Activated T-helper 1 cell treated with anti-CD3 and anti-CD28 coated beads, Interleukin-12 subunit alpha, Interleukin-12 subunit beta, Interleukin-2, Interleukin-4 antibody, amounts not matched to agents 30 ng/mL and 10 ng/mL and 1 ng/mL, durations not matched to agents 14 hours and 24 hours and 36 hours (primary cell): ENCODE measurements at regions of chr18 and their contacts with region 1.

Region 1: DNA sequence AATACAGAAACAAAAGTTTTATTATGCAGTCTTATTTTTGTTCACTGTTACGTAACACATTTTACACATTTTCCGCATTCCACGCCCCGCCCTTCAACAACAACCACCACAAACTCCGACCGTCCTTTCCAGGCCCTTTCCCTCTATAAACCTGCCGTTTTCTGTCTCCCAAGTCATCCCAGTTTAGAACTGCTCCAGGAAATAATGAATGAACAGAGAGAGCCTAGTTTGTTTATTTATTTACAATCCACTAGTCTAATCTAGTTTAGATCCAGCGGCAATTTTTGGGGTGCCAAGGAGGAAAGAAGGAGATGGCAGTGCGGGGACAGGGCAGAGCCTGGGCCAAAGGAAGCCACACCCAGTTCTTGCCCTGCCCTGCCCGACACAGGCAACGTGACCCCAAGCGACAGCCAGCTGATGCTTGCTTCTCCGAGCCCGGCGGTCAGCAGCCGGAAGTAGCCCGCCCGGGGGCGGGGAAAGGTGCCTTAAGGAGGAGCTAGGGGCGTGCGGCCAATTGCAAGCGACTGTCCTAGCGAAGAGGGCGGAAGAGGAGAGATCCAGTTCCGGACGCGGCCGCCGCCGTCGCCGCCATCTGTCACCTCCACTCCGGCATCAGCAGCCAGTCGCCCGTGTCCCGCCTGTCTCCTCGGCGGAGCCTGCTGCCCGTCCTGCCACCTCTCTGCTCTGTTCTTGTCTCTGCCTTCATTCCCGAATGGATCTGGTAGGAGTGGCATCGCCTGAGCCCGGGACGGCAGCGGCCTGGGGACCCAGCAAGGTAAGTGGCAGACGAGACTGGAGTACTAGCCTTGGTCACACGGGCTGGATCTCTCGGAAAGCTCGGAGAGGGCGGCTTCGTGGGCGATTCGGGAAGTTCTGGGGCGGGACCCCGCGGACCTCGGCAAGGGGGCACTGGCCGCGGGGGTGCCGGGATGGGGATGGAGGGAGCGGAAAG is at the start of gene RIOK3:
- DNase-seq: peak; percentile 94
- H3K4me3 Mint-ChIP-seq: peak within 1 kb of the TSS; percentile 97
- H3K27ac Mint-ChIP-seq: peak within 1 kb of the TSS; percentile 92
- H3K4me1 Mint-ChIP-seq: peaks cover 39% of the 10 kb centered on the region
- H3K27me3 Mint-ChIP-seq: no peaks in the 10 kb centered on the region
- total RNA-seq, gene RIOK3: 40.8 and 52.2 TPM in 2 replicates

Region 2: GRCh38 chr18:23380001-23380550 is 72.9 kb before region 1 on chr18:
- intact Hi-C with region 1: no loop called
- DNase-seq: no peak
- H3K4me3 Mint-ChIP-seq: no peak overlapping the region
- H3K27ac Mint-ChIP-seq: no peak overlapping the region
- H3K4me1 Mint-ChIP-seq: peaks cover 21% of the 10 kb centered on the region
- H3K27me3 Mint-ChIP-seq: peaks cover 8% of the 10 kb centered on the region

Region 3: GRCh38 chr18:23401400-23402347 is 51.3 kb before region 1 on chr18:
- intact Hi-C with region 1: no loop called
- DNase-seq: no peak
- H3K4me3 Mint-ChIP-seq: no peak overlapping the region
- H3K27ac Mint-ChIP-seq: no peak overlapping the region
- H3K4me1 Mint-ChIP-seq: peaks cover 25% of the 10 kb centered on the region
- H3K27me3 Mint-ChIP-seq: no peaks in the 10 kb centered on the region

Region 4: DNA sequence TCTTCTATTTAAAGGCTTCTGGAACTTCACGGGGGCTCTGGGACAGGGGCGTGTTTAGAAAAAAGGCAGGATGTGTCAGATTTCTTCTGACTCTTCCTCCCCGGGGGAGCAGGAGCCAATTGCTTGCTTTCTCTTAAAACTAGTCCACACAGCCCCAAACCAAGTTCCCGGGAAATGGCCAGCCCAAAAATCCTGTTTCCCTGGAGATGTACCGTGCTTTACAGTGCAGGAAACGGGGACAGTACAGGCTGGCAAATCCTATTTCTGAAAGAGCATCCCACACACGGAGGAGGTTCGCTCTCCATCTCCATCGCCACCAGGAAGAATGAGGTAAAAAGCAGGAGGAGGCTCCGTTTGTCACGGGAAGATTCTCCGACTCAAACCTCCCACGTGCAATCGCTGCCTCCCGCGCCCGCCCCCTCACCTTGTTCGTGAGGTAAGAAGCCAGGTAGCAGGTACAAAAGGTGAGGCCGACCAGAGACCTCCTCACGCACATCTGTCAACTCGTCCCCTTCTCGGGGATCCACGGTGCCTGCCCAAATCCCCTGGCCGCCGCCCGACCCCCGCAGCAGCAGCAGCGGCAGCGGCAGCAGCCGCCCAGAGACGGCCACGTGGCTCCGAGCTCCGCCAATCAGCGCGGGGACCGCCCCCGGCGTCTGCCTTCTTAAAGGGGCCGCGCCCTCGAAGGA is 15.5 kb before region 1 on chr18:
- intact Hi-C with region 1: loop called (anchors 1 kb)
- DNase-seq: peak; percentile 74
- H3K4me3 Mint-ChIP-seq: peak overlapping the region; percentile 86
- H3K27ac Mint-ChIP-seq: peak overlapping the region; percentile 44
- H3K4me1 Mint-ChIP-seq: peaks cover 22% of the 10 kb centered on the region
- H3K27me3 Mint-ChIP-seq: peaks cover 2% of the 10 kb centered on the region

Region 5: GRCh38 chr18:23828426-23828825 is 375.4 kb after region 1 on chr18:
- intact Hi-C with region 1: no loop called
- DNase-seq: peak; percentile 49
- H3K4me3 Mint-ChIP-seq: no peak overlapping the region
- H3K27ac Mint-ChIP-seq: peak overlapping the region; percentile 89
- H3K4me1 Mint-ChIP-seq: peaks cover 52% of the 10 kb centered on the region
- H3K27me3 Mint-ChIP-seq: peaks cover 4% of the 10 kb centered on the region

Region 6: GRCh38 chr18:24426398-24427294 is 973.6 kb after region 1 on chr18 and contains the start of gene IMPACT:
- intact Hi-C with region 1: loop called (anchors 5 kb)
- DNase-seq: peak; percentile 64
- H3K4me3 Mint-ChIP-seq: peak within 1 kb of the TSS; percentile 86
- H3K27ac Mint-ChIP-seq: peak within 1 kb of the TSS; percentile 87
- H3K4me1 Mint-ChIP-seq: peaks cover 27% of the 10 kb centered on the region
- H3K27me3 Mint-ChIP-seq: peaks cover 20% of the 10 kb centered on the region
- total RNA-seq, gene IMPACT: 9.5 and 11.8 TPM in 2 replicates